BJ (cell line): ENCODE measurements at regions of chr2 and their contacts with region 1.

Region 1: DNA sequence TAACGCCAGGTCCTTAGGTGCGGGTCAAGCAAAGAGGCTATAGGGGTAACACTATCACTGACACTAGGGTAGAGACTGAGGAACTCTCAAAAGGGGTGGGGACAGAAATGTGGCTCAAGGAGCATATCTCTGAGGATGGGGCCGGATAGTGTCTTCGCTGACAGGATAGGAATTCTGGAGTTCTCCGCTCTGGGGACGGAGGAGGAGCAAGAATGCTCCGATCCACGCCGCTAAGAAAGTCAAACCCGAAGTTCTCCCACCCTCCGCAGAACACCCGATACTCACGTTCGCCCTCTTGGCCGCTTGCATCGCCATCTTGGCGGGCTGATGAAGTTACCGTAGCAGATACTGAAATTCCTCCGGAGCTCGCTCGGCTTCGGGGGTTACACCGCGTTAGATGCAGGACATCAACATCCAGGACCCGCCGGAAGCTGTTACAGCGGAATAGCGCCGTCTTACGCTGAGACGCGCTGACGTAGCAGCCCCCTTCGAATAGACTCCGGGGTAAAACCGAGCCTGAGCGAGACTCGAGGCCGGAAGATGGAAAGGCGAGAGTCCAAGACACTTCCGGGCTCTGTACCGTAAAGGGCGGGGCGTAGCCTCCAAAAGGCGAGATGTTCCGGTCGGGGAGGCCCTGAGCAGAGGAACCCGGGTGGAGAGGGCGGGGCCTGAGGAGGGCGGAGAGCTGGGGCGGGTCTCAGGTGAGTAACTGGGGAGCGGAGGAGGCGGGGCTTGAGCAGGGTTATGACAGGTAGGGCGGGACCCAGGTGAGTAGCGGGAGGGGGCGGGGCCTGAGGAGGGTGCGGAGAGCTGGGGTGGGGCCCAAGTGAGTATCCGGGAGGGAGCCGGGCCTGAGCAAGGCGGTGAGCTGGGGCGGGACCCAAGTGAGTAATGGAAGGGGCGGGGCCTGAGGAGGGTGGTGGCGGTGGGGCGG is at the start of gene SF3B6:
- DNase-seq: peak; percentile 95
- H3K4me3 ChIP-seq: peak within 1 kb of the TSS; percentile 94
- H3K27me3 ChIP-seq: no peaks in the 10 kb centered on the region
- CTCF ChIP-seq: no peak
- polyA plus RNA-seq, gene SF3B6: 107 and 199 TPM in 2 replicates

Region 2: GRCh38 chr2:23916727-23917405 is 159.3 kb before region 1 on chr2:
- CTCF ChIA-PET with region 1: no interaction called
- POLR2A ChIA-PET with region 1: interaction called, 19 read pairs
- DNase-seq: no peak
- H3K4me3 ChIP-seq: no peak overlapping the region
- H3K27me3 ChIP-seq: no peaks in the 10 kb centered on the region
- CTCF ChIP-seq: no peak

Region 3: DNA sequence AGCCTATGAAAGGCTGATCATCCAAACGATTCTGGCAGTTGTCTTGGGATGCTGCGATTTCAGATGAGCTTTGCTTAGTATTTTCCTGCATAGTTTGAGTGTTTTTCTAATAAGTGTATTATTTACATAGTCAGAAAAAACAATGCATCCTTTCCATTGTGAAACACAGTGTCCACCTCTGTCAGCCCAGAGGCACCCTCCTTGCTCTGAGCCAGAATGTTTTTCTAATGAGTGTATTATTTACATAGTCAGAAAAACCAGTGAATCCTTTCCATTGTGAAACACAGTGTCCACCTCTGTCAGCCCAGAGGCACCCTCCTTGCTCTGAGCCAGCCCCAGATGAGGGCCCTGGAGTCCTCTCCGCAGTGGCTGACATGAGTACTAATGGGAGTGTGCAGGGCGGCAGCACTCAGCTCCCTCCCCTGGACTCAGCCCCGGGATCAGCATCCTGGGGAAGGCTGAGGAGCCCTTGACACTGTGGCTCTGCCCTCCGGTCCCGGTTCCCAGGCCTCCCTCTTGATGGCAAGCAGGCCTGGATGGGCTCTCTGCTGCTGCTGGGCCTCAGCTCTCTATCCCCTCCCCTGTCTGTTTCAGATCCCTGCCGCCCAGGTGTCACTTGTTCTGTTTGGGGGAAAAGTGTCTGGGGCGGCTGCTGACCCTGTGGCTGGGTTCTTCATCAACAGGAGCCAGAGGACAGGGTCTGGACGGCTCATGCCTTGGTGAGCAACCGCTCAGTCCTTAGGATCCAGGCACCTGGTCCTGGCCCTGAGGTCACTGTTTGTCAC is 60.4 kb before region 1 on chr2:
- CTCF ChIA-PET with region 1: no interaction called
- POLR2A ChIA-PET with region 1: interaction called, 12 read pairs
- DNase-seq: peak; percentile 55
- H3K4me3 ChIP-seq: no peak overlapping the region
- H3K27me3 ChIP-seq: no peaks in the 10 kb centered on the region
- CTCF ChIP-seq: no peak